Activated naive CD4-positive, alpha-beta T cell treated with anti-CD3 and anti-CD28 coated beads for 36 hours (primary cell): ENCODE measurements at regions of chrX and their contacts with region 1.

Region 1: GRCh38 chrX:104195489-104196084 is 29.3 kb downstream of the FAM199X start:
- DNase-seq: peak; percentile 6
- H3K4me3 Mint-ChIP-seq: no peak overlapping the region
- H3K27ac Mint-ChIP-seq: no peak overlapping the region
- H3K4me1 Mint-ChIP-seq: peaks cover 2% of the 10 kb centered on the region
- H3K27me3 Mint-ChIP-seq: no peaks in the 10 kb centered on the region

Region 2: GRCh38 chrX:104270920-104271512 is 75.4 kb after region 1 on chrX:
- CTCF ChIA-PET with region 1: interaction called, 18 read pairs
- intact Hi-C with region 1: loop called (anchors 1 kb)
- DNase-seq: peak; percentile 64
- H3K4me3 Mint-ChIP-seq: peak overlapping the region; percentile 25
- H3K27ac Mint-ChIP-seq: no peak overlapping the region
- H3K4me1 Mint-ChIP-seq: peaks cover 4% of the 10 kb centered on the region
- H3K27me3 Mint-ChIP-seq: peaks cover 8% of the 10 kb centered on the region

Region 3: GRCh38 chrX:104343428-104344129 is 148.0 kb after region 1 on chrX:
- CTCF ChIA-PET with region 1: no interaction called
- intact Hi-C with region 1: loop called (anchors 1 kb)
- DNase-seq: peak; percentile 56
- H3K4me3 Mint-ChIP-seq: no peak overlapping the region
- H3K27ac Mint-ChIP-seq: no peak overlapping the region
- H3K4me1 Mint-ChIP-seq: no peaks in the 10 kb centered on the region
- H3K27me3 Mint-ChIP-seq: no peaks in the 10 kb centered on the region

Region 4: DNA sequence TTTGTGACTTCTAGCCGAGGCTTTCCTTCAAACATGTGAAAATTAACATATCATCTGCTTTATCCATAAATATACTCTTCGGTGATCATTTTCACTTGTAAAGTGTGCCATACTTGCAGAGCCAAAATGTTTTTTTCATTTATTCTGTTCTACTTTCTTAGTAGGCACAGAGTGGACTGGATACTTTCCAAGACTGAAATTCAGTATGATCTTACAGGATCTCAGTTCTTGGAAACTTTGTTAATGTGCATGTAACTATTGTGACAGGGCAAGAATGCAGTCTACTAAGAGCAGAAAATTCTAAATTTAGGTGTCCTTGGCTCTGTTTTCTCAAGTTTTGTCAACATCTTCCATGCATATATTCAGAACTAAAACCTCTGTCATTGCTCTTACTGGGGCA is 740.0 kb after region 1 on chrX:
- CTCF ChIA-PET with region 1: no interaction called
- intact Hi-C with region 1: no loop called
- DNase-seq: no peak
- H3K4me3 Mint-ChIP-seq: no peak overlapping the region
- H3K27ac Mint-ChIP-seq: no peak overlapping the region
- H3K4me1 Mint-ChIP-seq: no peaks in the 10 kb centered on the region
- H3K27me3 Mint-ChIP-seq: peaks cover 3% of the 10 kb centered on the region